ENCODE measurements at regions of chr1 and their contacts with region 1.

Region 1: DNA sequence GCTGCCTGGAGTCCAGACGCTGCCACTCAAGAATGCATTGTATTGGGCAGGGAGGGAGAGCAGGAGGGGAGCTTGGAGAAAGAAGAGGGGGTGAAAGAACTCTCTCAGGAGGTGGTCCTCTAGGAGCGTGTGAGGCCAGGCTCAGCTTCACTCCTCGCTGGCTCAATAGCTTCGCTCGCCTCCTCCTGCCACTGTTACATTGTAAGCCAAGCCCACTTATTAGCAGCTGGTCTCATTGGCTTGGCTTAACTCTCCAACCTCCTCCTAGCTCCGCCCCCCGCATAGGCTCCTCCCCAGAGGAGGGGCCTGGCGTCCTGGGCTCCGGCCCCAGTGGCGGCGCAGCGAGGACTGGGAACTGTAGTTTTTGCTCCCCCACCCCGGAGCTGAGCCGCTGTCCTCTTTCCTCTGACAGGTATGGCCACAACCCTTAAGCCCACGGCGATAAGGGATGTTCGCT is at the start of gene KCNN3:
- DNase-seq: peak; percentile 84
- H3K4me3 Mint-ChIP-seq: peak within 1 kb of the TSS; percentile 5
- H3K27ac Mint-ChIP-seq: no peak within 1 kb of the TSS
- H3K4me1 Mint-ChIP-seq: peaks cover 34% of the 10 kb centered on the region
- H3K27me3 Mint-ChIP-seq: peaks cover 35% of the 10 kb centered on the region
- total RNA-seq, gene KCNN3: 0.25 to 0.26 TPM

Region 2: GRCh38 chr1:154669464-154670282 is 200.5 kb before region 1 on chr1:
- CTCF ChIA-PET with region 1: interaction called, 15 read pairs
- intact Hi-C with region 1: loop called (anchors 2 kb)
- DNase-seq: peak; percentile 90
- H3K4me3 Mint-ChIP-seq: no peak overlapping the region
- H3K27ac Mint-ChIP-seq: no peak overlapping the region
- H3K4me1 Mint-ChIP-seq: peaks cover 34% of the 10 kb centered on the region
- H3K27me3 Mint-ChIP-seq: no peaks in the 10 kb centered on the region

Measured in activated naive CD4-positive, alpha-beta T cell treated with anti-CD3 and anti-CD28 coated beads for 36 hours (primary cell).